AG04449 (cell line): ENCODE measurements at regions of chr1 and their contacts with region 1.

Region 1: DNA sequence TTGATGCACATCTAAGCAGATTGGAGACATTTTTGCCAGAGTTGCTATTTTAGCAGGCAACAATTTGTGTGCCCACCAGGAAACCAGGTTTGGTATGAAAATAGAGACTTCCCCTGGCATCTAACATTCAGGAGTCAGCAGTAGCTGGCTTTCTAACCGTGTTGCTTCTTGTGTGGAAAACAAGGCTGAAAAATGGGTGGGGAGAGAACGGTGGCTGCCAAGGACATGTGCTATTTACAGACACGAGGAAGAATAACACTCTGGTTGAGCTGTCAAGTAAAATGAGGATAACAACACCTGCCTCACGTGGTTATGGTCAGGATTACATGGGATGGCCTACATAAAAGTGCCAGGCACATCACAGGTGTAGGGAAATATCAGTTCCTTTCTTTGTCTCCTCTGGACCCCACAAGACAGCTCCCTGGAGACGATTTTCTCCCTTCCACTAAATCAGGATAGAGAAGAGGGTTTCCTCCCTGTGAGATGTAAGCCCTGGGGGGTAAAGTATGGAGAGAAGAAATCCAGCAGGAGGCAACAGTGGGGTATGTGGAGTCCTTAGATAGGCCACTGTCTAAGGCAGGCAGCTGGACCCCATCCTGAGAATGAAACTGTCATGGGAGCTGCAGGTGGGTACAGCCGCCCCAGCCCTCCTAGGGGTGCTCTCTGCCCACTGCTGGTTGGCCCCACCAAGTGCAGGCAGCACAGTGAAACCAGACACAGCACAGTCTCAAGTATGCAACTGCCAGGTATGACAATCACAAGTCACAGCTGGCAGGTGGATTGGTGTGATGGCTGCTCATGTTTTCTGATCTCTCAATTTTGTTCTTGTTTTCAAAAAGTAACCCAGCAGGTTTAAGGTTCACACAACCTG is 80.3 kb downstream of the TENT5C start:
- DNase-seq: no peak
- H3K4me3 ChIP-seq: no peak overlapping the region
- CTCF ChIP-seq: no peak

Region 2: GRCh38 chr1:117674521-117675397 is 11.4 kb before region 1 on chr1:
- CTCF ChIA-PET with region 1: interaction called, 13 read pairs
- POLR2A ChIA-PET with region 1: interaction called, 3 read pairs
- DNase-seq: no peak
- H3K4me3 ChIP-seq: no peak overlapping the region
- CTCF ChIP-seq: peak; percentile 32